Ascending aorta (tissue), 2 donors: ENCODE measurements at regions of chr4 and their contacts with region 1.

Region 1: DNA sequence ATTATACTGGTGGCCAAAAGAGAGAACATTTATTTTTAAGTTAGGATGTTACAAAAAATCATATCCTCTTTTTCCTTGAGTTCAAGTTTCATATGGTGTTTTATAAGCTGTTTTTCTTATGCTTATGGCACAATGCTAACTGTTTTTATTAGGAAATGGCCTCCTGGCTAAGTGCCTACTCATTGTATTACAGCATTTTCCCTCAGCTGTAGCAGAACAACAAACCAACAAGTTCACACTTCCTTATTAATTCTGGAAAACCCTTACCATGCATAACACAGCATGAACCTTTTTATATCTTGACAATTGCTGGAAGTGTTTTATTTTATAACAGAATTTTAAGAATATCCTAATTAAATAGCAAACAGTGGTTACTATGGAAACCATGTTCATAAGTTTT is 165.8 kb downstream of the GASK1B start:
- DNase-seq: no peak
- H3K4me3 ChIP-seq: no peak overlapping the region
- H3K27ac ChIP-seq: peak overlapping the region; percentile 60 to 66
- H3K4me1 ChIP-seq: peaks cover 0 to 29% of the 10 kb centered on the region in 2 donors
- H3K27me3 ChIP-seq: no peaks in the 10 kb centered on the region
- CTCF ChIP-seq: no peak

Region 2: GRCh38 chr4:158161551-158162354 is 154.8 kb after region 1 on chr4:
- intact Hi-C with region 1: loop called (anchors 5 kb)
- DNase-seq: peak in 1 of 2 donors; percentile 85
- H3K4me3 ChIP-seq: peak overlapping the region; percentile 2 to 30
- H3K27ac ChIP-seq: peak overlapping the region; percentile 69 to 74
- H3K4me1 ChIP-seq: peaks cover 4 to 45% of the 10 kb centered on the region in 2 donors
- H3K27me3 ChIP-seq: no peaks in the 10 kb centered on the region
- CTCF ChIP-seq: no peak